A673 (cell line): ENCODE measurements at regions of chr6 and their contacts with region 1.

Region 1: GRCh38 chr6:154733012-154733625 is at the start of gene SCAF8:
- DNase-seq: peak; percentile 91
- H3K4me3 ChIP-seq: peak within 1 kb of the TSS; percentile 78
- H3K27ac ChIP-seq: peak within 1 kb of the TSS; percentile 97
- H3K4me1 ChIP-seq: peaks cover 14% of the 10 kb centered on the region
- H3K27me3 ChIP-seq: no peaks in the 10 kb centered on the region
- CTCF ChIP-seq: peak; percentile 69
- total RNA-seq, gene SCAF8: 49.5 and 51.5 TPM in 2 replicates

Region 2: DNA sequence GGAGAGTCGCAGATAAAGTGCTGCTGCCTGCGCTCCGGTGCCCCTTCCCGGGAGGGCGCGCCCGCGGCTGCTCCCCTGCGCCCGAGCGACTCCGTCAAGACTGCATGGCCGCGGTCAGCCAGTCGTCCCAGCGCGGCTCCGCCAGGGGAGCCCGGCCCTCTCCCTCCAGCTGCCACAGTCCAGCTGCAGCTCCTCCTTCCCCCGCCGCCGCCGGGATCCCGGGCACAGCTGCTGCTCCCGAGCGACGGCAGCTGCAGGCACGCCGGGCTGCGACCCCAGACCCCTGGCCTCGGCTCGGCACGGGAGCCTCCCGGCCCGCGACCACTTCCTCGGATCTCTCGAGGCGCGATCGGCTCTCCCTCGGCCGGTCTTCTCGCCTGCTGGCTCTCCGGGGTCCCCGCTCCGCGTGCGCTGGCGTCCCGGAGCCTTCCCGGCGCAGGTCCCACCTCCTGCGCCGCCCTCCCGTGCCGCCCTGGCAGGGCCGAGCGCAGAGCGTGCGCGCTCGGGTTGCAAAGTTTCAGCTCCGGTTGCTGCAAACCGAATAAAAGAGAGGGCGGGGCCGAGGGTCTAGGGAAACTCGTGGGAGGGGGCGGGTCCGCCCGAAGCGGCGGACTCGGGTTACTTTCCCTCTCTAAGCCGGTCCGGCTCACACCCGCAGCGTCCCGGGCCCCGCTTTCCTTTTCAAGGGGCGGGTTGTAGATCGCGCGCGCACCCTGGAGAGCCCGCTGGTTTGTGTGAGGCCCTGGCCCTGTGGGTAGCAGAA is 222.8 kb before region 1 on chr6 and contains the start of gene CNKSR3:
- CTCF ChIA-PET with region 1: no interaction called
- POLR2A ChIA-PET with region 1: no interaction called
- intact Hi-C with region 1: loop called (anchors 5 kb)
- DNase-seq: peak; percentile 99
- H3K4me3 ChIP-seq: peak within 1 kb of the TSS; percentile 71
- H3K27ac ChIP-seq: peak within 1 kb of the TSS; percentile 84
- H3K4me1 ChIP-seq: peaks cover 38% of the 10 kb centered on the region
- H3K27me3 ChIP-seq: no peaks in the 10 kb centered on the region
- CTCF ChIP-seq: no peak
- total RNA-seq, gene CNKSR3: 10.3 and 10.5 TPM in 2 replicates

Region 3: GRCh38 chr6:154805288-154805911 is 72.3 kb after region 1 on chr6:
- CTCF ChIA-PET with region 1: no interaction called
- POLR2A ChIA-PET with region 1: no interaction called
- intact Hi-C with region 1: loop called (anchors 1 kb)
- DNase-seq: peak; percentile 61
- H3K4me3 ChIP-seq: no peak overlapping the region
- H3K27ac ChIP-seq: no peak overlapping the region
- H3K4me1 ChIP-seq: no peaks in the 10 kb centered on the region
- H3K27me3 ChIP-seq: no peaks in the 10 kb centered on the region
- CTCF ChIP-seq: peak; percentile 55